Esophagus squamous epithelium (tissue), 5 donors: ENCODE measurements at regions of chr12 and their contacts with region 1.

Region 1: DNA sequence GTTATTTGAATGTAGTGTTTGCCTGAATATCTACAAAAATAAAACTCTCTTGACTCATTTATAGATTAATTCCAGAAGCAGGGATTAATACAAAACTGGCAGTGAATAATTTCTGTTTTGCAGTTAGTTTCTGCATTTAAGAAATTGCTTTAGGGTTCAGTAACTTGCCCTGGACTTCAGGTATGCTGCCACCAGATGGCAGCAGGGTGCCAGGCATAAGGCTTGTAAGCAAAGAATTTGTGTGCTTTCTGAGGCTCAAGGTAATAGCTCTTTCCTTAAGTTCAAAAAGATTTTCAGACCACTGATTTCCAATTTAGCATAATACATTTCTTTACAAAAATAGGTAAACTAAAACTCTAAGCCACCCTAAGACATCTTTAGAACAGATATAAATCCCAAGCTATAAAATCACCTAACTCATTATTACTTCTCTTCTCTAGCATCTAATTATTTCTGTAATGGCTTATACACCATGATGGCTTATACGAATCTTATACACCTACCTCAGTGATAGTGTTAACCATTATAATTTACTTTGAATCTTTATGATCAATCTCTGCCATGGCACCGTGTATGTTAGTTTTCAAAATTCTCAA is 398.3 kb downstream of the APAF1 start:
- DNase-seq: no peak
- H3K4me3 ChIP-seq: no peak overlapping the region
- H3K27ac ChIP-seq: no peak overlapping the region
- H3K4me1 ChIP-seq: no peaks in the 10 kb centered on the region
- H3K27me3 ChIP-seq: peaks cover 0 to 20% (median 0%) of the 10 kb centered on the region in 4 donors
- CTCF ChIP-seq: peak; percentile 69 to 89 (median 77)
- POLR2A ChIP-seq: no peak

Region 2: GRCh38 chr12:99334285-99335056 is 291.1 kb after region 1 on chr12:
- intact Hi-C with region 1: no loop called
- DNase-seq: no peak
- H3K4me3 ChIP-seq: no peak overlapping the region
- H3K27ac ChIP-seq: no peak overlapping the region
- H3K4me1 ChIP-seq: no peaks in the 10 kb centered on the region
- H3K27me3 ChIP-seq: no peaks in the 10 kb centered on the region
- CTCF ChIP-seq: no peak
- POLR2A ChIP-seq: no peak

Region 3: GRCh38 chr12:99767809-99768208 is 724.4 kb after region 1 on chr12:
- intact Hi-C with region 1: loop called (anchors 10 kb)
- DNase-seq: no peak
- H3K4me3 ChIP-seq: no peak overlapping the region
- H3K27ac ChIP-seq: no peak overlapping the region
- H3K4me1 ChIP-seq: peaks cover 0 to 32% (median 0%) of the 10 kb centered on the region in 3 donors
- H3K27me3 ChIP-seq: no peaks in the 10 kb centered on the region
- CTCF ChIP-seq: peak in 4 of 6 experiments; percentile 11 to 56 (median 36)
- POLR2A ChIP-seq: no peak